Naive thymus-derived CD4-positive, alpha-beta T cell (primary cell): ENCODE measurements at regions of chr6 and their contacts with region 1.

Region 1: DNA sequence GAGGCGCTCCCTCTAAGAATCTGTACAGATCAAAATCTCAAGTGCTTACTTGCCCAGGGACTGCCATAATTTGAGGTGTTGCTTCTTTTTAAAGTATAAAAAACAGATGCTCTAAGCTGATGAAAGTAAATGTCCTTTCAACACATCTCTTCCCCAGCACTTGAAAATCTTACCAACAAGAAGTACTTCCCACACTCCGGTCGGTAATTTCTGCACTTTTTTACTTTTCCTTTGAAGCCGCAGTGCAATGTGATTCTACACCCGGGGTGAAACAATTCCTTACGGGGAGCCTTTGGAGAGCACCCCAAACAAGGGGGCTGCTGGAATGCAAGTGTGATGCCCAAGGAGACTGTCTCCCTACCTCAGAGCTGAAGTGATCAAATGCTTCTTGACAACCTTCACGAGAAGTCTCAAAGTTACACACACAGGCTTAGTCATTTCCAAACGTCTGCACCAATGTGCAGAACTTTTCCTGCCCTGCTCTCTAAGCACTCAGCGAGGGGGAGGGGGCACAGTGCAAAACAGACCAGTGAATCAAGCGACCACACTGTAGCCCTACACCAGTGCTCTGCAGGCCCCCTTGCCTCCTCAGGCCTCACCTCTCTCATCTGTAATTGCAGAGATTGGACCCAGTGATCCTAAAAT is 56.7 kb downstream of the ATXN1 start:
- DNase-seq: peak in 1 of 9 donors; percentile 58
- ATAC-seq: peak; percentile 49
- H3K4me3 ChIP-seq: peak overlapping the region; percentile 21
- H3K4me3 Mint-ChIP-seq: peak overlapping the region; percentile 19 to 82 (median 58)
- H3K27ac ChIP-seq: no peak overlapping the region
- H3K27ac Mint-ChIP-seq: peak overlapping the region in 3 of 9 donors; percentile 12 to 81 (median 65)
- H3K4me1 ChIP-seq: peaks cover 10 to 48% of the 10 kb centered on the region in 2 donors
- H3K4me1 Mint-ChIP-seq: peaks cover 47 to 64% (median 57%) of the 10 kb centered on the region in 7 donors
- H3K27me3 ChIP-seq: no peaks in the 10 kb centered on the region
- H3K27me3 Mint-ChIP-seq: no peaks in the 10 kb centered on the region

Region 2: GRCh38 chr6:16576451-16577368 is 127.8 kb before region 1 on chr6:
- CTCF ChIA-PET with region 1: no interaction called
- POLR2A ChIA-PET with region 1: no interaction called
- intact Hi-C with region 1: no loop called
- DNase-seq: no peak
- ATAC-seq: no peak
- H3K4me3 ChIP-seq: no peak overlapping the region
- H3K4me3 Mint-ChIP-seq: no peak overlapping the region
- H3K27ac ChIP-seq: no peak overlapping the region
- H3K27ac Mint-ChIP-seq: no peak overlapping the region
- H3K4me1 ChIP-seq: no peaks in the 10 kb centered on the region
- H3K4me1 Mint-ChIP-seq: peaks cover 0 to 32% (median 5%) of the 10 kb centered on the region in 7 donors
- H3K27me3 ChIP-seq: no peaks in the 10 kb centered on the region
- H3K27me3 Mint-ChIP-seq: no peaks in the 10 kb centered on the region

Region 3: GRCh38 chr6:16657768-16658167 is 46.8 kb before region 1 on chr6:
- CTCF ChIA-PET with region 1: no interaction called
- POLR2A ChIA-PET with region 1: no interaction called
- intact Hi-C with region 1: loop called in 1 of 2 experiments (anchors 2 kb)
- DNase-seq: no peak
- ATAC-seq: peak; percentile 5
- H3K4me3 ChIP-seq: no peak overlapping the region
- H3K4me3 Mint-ChIP-seq: peak overlapping the region in 1 of 10 donors; percentile 45
- H3K27ac ChIP-seq: no peak overlapping the region
- H3K27ac Mint-ChIP-seq: peak overlapping the region in 2 of 9 donors; percentile 11 to 93
- H3K4me1 ChIP-seq: peaks cover 0 to 61% of the 10 kb centered on the region in 2 donors
- H3K4me1 Mint-ChIP-seq: peaks cover 24 to 67% (median 30%) of the 10 kb centered on the region in 7 donors
- H3K27me3 ChIP-seq: no peaks in the 10 kb centered on the region
- H3K27me3 Mint-ChIP-seq: no peaks in the 10 kb centered on the region

Region 4: GRCh38 chr6:16684896-16685554 is 19.5 kb before region 1 on chr6:
- CTCF ChIA-PET with region 1: no interaction called
- POLR2A ChIA-PET with region 1: no interaction called
- intact Hi-C with region 1: loop called in 1 of 2 experiments (anchors 2 kb)
- DNase-seq: peak in 3 of 9 donors; percentile 14 to 85 (median 52)
- ATAC-seq: peak; percentile 70
- H3K4me3 ChIP-seq: no peak overlapping the region
- H3K4me3 Mint-ChIP-seq: peak overlapping the region in 1 of 10 donors; percentile 54
- H3K27ac ChIP-seq: no peak overlapping the region
- H3K27ac Mint-ChIP-seq: peak overlapping the region in 3 of 9 donors; percentile 23 to 63 (median 30)
- H3K4me1 ChIP-seq: peaks cover 0 to 32% of the 10 kb centered on the region in 2 donors
- H3K4me1 Mint-ChIP-seq: peaks cover 4 to 70% (median 18%) of the 10 kb centered on the region in 7 donors
- H3K27me3 ChIP-seq: no peaks in the 10 kb centered on the region
- H3K27me3 Mint-ChIP-seq: no peaks in the 10 kb centered on the region

Region 5: GRCh38 chr6:16690608-16691198 is 13.8 kb before region 1 on chr6:
- CTCF ChIA-PET with region 1: no interaction called
- POLR2A ChIA-PET with region 1: no interaction called
- intact Hi-C with region 1: loop called in 1 of 2 experiments (anchors 1 kb)
- DNase-seq: peak in 1 of 9 donors; percentile 58
- ATAC-seq: no peak
- H3K4me3 ChIP-seq: no peak overlapping the region
- H3K4me3 Mint-ChIP-seq: peak overlapping the region in 1 of 10 donors; percentile 80
- H3K27ac ChIP-seq: no peak overlapping the region
- H3K27ac Mint-ChIP-seq: peak overlapping the region in 1 of 9 donors; percentile 86
- H3K4me1 ChIP-seq: peaks cover 0 to 55% of the 10 kb centered on the region in 2 donors
- H3K4me1 Mint-ChIP-seq: peaks cover 18 to 76% (median 31%) of the 10 kb centered on the region in 7 donors
- H3K27me3 ChIP-seq: no peaks in the 10 kb centered on the region
- H3K27me3 Mint-ChIP-seq: no peaks in the 10 kb centered on the region